ENCODE measurements at regions of chr20 and their contacts with region 1.

Region 1: GRCh38 chr20:49179368-49180277 is 8.5 kb downstream of the STAU1 start:
- DNase-seq: peak; percentile 28
- H3K4me3 ChIP-seq: no peak overlapping the region
- H3K27ac ChIP-seq: no peak overlapping the region
- H3K4me1 ChIP-seq: peaks cover 10% of the 10 kb centered on the region
- H3K27me3 ChIP-seq: no peaks in the 10 kb centered on the region
- CTCF ChIP-seq: no peak
- POLR2A ChIP-seq: no peak

Region 2: DNA sequence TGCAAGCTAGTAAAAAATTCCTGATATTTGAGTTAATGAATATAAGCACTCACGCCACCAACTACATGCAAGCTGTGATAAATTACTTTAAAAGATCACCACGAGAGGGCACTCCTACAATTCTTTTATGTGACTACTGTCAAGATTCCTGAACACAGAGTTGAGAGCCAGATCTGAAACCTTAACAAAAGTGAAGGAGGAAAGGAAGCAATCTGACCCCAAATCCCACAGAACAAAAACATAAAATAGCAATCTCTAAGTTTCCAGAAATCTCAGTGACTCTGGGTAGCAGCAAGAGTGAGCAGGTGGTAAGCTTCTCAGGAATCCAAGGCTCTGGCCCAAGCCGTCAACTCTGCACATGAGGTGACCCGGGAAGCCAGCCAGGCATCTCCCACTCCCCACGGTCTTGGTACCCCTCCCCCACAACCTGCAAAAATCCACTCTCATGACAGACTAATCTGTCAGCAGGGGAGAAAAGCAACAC is 46.6 kb before region 1 on chr20:
- CTCF ChIA-PET with region 1: interaction called, 23 read pairs
- POLR2A ChIA-PET with region 1: no interaction called
- dilution Hi-C with region 1: no loop called
- intact Hi-C with region 1: no loop called
- DNase-seq: peak; percentile 76
- H3K4me3 ChIP-seq: no peak overlapping the region
- H3K27ac ChIP-seq: no peak overlapping the region
- H3K4me1 ChIP-seq: no peaks in the 10 kb centered on the region
- H3K27me3 ChIP-seq: no peaks in the 10 kb centered on the region
- CTCF ChIP-seq: peak; percentile 29 to 32
- POLR2A ChIP-seq: no peak

Region 3: GRCh38 chr20:49166534-49167449 is 12.8 kb before region 1 on chr20:
- CTCF ChIA-PET with region 1: interaction called, 11 read pairs
- POLR2A ChIA-PET with region 1: interaction called, 4 read pairs
- dilution Hi-C with region 1: no loop called
- intact Hi-C with region 1: no loop called
- DNase-seq: no peak
- H3K4me3 ChIP-seq: no peak overlapping the region
- H3K27ac ChIP-seq: no peak overlapping the region
- H3K4me1 ChIP-seq: peaks cover 2% of the 10 kb centered on the region
- H3K27me3 ChIP-seq: no peaks in the 10 kb centered on the region
- CTCF ChIP-seq: no peak
- POLR2A ChIP-seq: no peak

Region 4: DNA sequence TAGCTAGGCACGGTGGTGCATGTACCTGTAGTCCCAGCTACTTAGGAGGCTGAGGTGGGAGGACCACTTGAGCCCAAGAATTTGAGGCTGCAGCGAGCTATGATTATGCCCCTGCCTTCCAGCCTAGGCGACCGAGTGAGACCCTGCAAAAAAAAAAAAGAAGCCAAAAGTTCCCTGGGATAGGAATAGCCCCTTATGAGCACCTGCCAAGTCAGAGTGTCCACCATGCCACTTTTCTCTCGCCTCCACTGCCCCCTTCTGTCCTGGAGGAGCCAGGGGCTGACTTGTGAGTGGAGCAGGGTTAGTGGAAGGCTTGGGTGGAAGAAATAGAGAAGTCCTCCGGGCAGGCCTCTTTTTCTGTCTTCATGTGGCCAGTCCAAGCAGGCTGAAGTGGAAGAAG is 27.5 kb after region 1 on chr20:
- CTCF ChIA-PET with region 1: interaction called, 10 read pairs
- POLR2A ChIA-PET with region 1: no interaction called
- dilution Hi-C with region 1: no loop called
- intact Hi-C with region 1: no loop called
- DNase-seq: no peak
- H3K4me3 ChIP-seq: no peak overlapping the region
- H3K27ac ChIP-seq: no peak overlapping the region
- H3K4me1 ChIP-seq: no peaks in the 10 kb centered on the region
- H3K27me3 ChIP-seq: no peaks in the 10 kb centered on the region
- CTCF ChIP-seq: no peak
- POLR2A ChIP-seq: no peak